MCF 10A (cell line): ENCODE measurements at regions of chr12 and their contacts with region 1.

Region 1: DNA sequence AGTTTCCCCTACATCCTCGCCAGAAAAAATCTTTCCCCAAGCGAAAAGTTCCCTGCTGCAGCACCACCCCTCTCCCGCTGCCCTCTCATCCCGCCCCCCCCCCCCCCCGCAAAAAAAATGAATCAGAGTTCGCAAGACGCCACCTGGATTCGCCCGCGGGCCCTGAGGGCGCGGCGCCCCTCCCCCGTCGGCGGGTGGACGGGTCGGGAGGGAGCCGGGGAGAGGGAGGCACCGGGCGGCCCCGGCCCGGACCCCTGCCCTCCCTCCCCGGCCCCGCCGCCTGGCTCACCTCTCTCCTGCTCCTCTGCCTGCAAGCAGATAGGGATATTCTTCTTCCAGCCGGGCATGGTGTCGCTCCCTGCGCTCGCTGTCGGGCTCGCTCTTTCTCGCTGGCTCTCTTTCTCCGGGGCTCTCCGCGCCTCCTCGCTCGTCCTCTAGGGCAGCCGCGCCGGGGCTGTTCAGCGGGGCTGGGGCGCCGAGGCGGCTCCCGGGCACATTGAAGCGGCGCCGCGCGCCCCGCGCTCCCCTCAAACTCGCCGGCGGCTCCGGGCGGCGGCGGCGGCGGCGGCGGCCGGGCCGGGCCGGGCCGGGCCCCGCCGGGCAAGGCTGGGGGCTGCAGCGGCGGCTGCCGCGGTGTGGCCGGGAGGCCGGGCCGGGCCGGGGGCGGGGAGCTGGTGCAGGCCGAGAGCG is 200.3 kb upstream of the CAND1 start:
- DNase-seq: peak; percentile 69
- H3K4me3 Mint-ChIP-seq: peak overlapping the region; percentile 77
- H3K27ac Mint-ChIP-seq: peak overlapping the region; percentile 63
- H3K4me1 Mint-ChIP-seq: peaks cover 21% of the 10 kb centered on the region
- H3K27me3 Mint-ChIP-seq: no peaks in the 10 kb centered on the region
- CTCF ChIP-seq: peak; percentile 1

Region 2: GRCh38 chr12:66901138-66901932 is 167.6 kb before region 1 on chr12:
- CTCF ChIA-PET with region 1: no interaction called
- POLR2A ChIA-PET with region 1: no interaction called
- intact Hi-C with region 1: loop called (anchors 5 kb)
- DNase-seq: no peak
- H3K4me3 Mint-ChIP-seq: no peak overlapping the region
- H3K27ac Mint-ChIP-seq: no peak overlapping the region
- H3K4me1 Mint-ChIP-seq: peaks cover 10% of the 10 kb centered on the region
- H3K27me3 Mint-ChIP-seq: no peaks in the 10 kb centered on the region
- CTCF ChIP-seq: no peak

Region 3: DNA sequence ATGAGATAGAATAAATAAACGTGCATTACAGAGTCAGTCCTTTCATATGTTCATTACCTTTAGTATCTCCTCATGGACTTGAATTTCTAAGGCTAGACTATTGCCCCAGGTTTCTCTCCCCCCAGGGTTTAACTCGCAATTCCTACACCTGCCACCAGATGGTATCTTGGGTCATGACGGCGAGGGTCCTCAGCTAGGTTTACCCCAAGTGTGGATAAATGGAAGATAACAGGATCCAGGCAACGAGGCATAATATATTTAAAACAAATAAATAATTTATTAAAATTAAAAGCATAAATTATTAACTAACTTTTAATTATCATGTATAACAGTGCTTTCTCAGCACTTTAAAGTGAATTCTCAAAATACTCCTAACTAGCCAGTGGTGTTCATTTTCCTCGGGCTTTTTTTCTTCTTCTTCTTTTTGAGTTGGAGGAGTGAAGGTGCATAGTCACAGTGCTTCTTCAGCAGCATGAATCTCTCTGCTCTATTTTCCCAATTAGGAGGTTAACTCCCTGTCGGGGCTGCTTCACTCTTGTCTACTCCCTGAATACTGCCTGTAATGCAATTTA is 43.3 kb before region 1 on chr12:
- CTCF ChIA-PET with region 1: interaction called, 4 read pairs
- POLR2A ChIA-PET with region 1: interaction called, 3 read pairs
- intact Hi-C with region 1: loop called (anchors 2 kb)
- DNase-seq: peak; percentile 62
- H3K4me3 Mint-ChIP-seq: no peak overlapping the region
- H3K27ac Mint-ChIP-seq: no peak overlapping the region
- H3K4me1 Mint-ChIP-seq: no peaks in the 10 kb centered on the region
- H3K27me3 Mint-ChIP-seq: peaks cover 16% of the 10 kb centered on the region
- CTCF ChIP-seq: peak; percentile 88

Region 4: DNA sequence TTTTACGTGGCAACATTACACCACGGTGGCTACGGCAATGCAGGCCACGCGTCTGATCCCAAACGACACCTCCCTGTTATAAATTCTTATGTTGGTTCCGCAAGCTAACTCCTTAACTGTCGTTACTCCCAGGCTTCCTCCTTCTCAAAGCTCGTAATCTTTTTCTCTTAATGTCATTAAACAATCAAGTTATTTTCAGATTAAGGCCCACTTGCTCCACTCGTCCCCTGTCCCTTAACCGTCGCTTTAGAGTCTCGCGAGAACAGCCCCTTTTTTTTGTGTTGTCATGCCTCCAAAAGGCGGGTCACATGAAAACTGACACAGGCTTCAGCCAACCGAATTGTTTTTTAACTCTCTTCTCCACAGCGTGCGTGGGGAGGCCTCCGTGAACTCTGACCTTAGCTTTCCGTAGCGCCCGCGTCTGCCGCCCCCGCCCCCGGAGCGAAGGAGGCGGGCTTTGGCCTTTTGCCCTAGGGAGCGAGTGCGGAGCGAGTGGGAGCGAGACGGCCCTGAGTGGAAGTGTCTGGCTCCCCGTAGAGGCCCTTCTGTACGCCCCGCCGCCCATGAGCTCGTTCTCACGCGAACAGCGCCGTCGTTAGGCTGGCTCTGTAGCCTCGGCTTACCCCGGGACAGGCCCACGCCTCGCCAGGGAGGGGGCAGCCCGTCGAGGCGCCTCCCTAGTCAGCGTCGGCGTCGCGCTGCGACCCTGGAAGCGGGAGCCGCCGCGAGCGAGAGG is 200.2 kb after region 1 on chr12 and contains the start of gene CAND1:
- CTCF ChIA-PET with region 1: interaction called, 4 read pairs
- POLR2A ChIA-PET with region 1: interaction called, 17 read pairs
- intact Hi-C with region 1: no loop called
- DNase-seq: peak; percentile 99
- H3K4me3 Mint-ChIP-seq: peak within 1 kb of the TSS; percentile 77
- H3K27ac Mint-ChIP-seq: peak within 1 kb of the TSS; percentile 99
- H3K4me1 Mint-ChIP-seq: peaks cover 14% of the 10 kb centered on the region
- H3K27me3 Mint-ChIP-seq: no peaks in the 10 kb centered on the region
- CTCF ChIP-seq: no peak
- total RNA-seq, gene CAND1: 149 and 160 TPM in 2 replicates